ENCODE measurements at regions of chr1 and their contacts with region 1.

Region 1: GRCh38 chr1:205061665-205062069 is 18.7 kb downstream of the CNTN2 start:
- DNase-seq: peak; percentile 76
- H3K4me3 Mint-ChIP-seq: no peak overlapping the region
- H3K27ac Mint-ChIP-seq: no peak overlapping the region
- H3K4me1 Mint-ChIP-seq: no peaks in the 10 kb centered on the region
- H3K27me3 Mint-ChIP-seq: no peaks in the 10 kb centered on the region

Region 2: GRCh38 chr1:204565617-204566582 is 495.8 kb before region 1 on chr1:
- CTCF ChIA-PET with region 1: no interaction called
- POLR2A ChIA-PET with region 1: no interaction called
- DNase-seq: peak; percentile 67
- H3K4me3 Mint-ChIP-seq: no peak overlapping the region
- H3K27ac Mint-ChIP-seq: peak overlapping the region; percentile 73
- H3K4me1 Mint-ChIP-seq: peaks cover 51% of the 10 kb centered on the region
- H3K27me3 Mint-ChIP-seq: no peaks in the 10 kb centered on the region

Region 3: DNA sequence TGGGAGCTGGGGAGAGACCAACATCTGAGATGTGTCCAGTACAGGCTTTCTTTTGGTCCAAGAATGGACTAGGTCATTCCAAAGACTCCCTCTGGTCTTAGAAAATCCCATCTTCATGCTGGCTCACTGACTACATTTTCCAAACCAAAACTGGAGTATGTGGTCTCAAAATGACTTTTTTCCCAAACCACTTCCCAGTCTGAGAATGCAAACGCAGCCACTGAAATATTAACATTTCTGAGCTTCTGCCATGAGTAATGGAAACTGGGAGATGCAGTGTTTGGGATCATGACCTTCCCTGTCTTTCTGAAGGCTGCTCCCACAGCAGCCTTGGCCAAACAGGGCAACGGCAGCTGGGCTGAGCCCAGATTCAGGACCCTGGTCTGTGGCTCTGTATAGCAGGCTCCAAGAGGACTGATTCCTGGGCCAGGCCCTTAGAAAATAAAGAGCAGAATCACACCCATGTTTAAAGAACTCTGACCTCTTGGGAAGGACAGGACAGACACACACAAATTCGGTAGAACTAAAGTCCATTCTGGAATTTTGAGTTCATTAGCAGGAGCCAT is 80.7 kb before region 1 on chr1:
- CTCF ChIA-PET with region 1: interaction called, 36 read pairs
- POLR2A ChIA-PET with region 1: no interaction called
- DNase-seq: no peak
- H3K4me3 Mint-ChIP-seq: no peak overlapping the region
- H3K27ac Mint-ChIP-seq: no peak overlapping the region
- H3K4me1 Mint-ChIP-seq: peaks cover 8% of the 10 kb centered on the region
- H3K27me3 Mint-ChIP-seq: peaks cover 17% of the 10 kb centered on the region

Region 4: GRCh38 chr1:204997591-204998355 is 63.9 kb before region 1 on chr1:
- CTCF ChIA-PET with region 1: interaction called, 14 read pairs
- POLR2A ChIA-PET with region 1: no interaction called
- DNase-seq: no peak
- H3K4me3 Mint-ChIP-seq: no peak overlapping the region
- H3K27ac Mint-ChIP-seq: no peak overlapping the region
- H3K4me1 Mint-ChIP-seq: peaks cover 7% of the 10 kb centered on the region
- H3K27me3 Mint-ChIP-seq: peaks cover 4% of the 10 kb centered on the region

Region 5: GRCh38 chr1:205048382-205048781 is 13.3 kb before region 1 on chr1:
- CTCF ChIA-PET with region 1: interaction called, 16 read pairs
- POLR2A ChIA-PET with region 1: no interaction called
- DNase-seq: no peak
- H3K4me3 Mint-ChIP-seq: no peak overlapping the region
- H3K27ac Mint-ChIP-seq: no peak overlapping the region
- H3K4me1 Mint-ChIP-seq: no peaks in the 10 kb centered on the region
- H3K27me3 Mint-ChIP-seq: peaks cover 27% of the 10 kb centered on the region

Region 6: GRCh38 chr1:205082431-205082830 is 20.8 kb after region 1 on chr1:
- CTCF ChIA-PET with region 1: interaction called, 27 read pairs
- POLR2A ChIA-PET with region 1: no interaction called
- DNase-seq: no peak
- H3K4me3 Mint-ChIP-seq: no peak overlapping the region
- H3K27ac Mint-ChIP-seq: no peak overlapping the region
- H3K4me1 Mint-ChIP-seq: no peaks in the 10 kb centered on the region
- H3K27me3 Mint-ChIP-seq: no peaks in the 10 kb centered on the region